ENCODE measurements at regions of chr16 and their contacts with region 1.

Region 1: GRCh38 chr16:57235128-57236021 is 9.7 kb upstream of the ARL2BP start:
- DNase-seq: no peak
- ATAC-seq: peak in 3 of 4 donors; percentile 13 to 25 (median 17)
- H3K4me3 ChIP-seq: no peak overlapping the region
- H3K27ac ChIP-seq: peak overlapping the region in 5 of 12 donors; percentile 5 to 72 (median 65)
- H3K4me1 ChIP-seq: peaks cover 0 to 24% (median 7%) of the 10 kb centered on the region in 12 donors
- H3K27me3 ChIP-seq: no peaks in the 10 kb centered on the region
- CTCF ChIP-seq: no peak
- POLR2A ChIP-seq: no peak

Region 2: DNA sequence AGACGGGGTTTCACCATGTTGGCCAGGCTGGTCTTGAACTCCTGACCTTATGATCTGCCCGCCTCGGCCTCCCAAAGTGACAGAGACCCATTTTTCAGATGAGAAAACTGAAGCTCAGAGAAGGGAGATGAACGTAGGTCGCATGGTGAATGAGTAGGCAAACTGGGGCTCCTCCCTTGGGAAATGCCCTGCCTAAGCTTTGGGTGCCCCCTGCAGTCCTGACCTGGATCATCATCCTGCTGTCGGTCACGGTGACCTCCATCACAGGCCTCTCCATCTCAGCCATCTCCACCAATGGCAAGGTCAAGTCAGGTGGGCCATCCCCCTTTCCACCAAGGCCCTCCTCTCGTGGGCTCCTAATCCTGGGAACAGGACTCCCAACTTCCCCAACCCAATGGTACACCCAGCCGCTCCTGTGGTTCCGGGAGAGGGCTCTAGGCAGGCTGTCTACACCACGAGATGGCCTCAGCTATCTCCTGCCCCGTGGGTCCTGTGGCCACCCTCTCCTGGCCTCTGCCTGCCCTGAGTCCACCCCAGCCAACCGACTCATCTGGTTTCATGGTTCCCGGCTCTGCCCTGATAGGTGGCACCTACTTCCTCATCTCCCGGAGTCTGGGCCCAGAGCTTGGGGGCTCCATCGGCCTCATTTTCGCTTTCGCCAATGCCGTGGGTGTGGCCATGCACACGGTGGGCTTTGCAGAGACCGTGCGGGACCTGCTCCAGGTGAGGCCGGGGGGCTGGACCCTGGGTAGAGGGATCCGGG is 365.7 kb before region 1 on chr16:
- intact Hi-C with region 1: no loop called
- DNase-seq: no peak
- ATAC-seq: no peak
- H3K4me3 ChIP-seq: no peak overlapping the region
- H3K27ac ChIP-seq: no peak overlapping the region
- H3K4me1 ChIP-seq: peaks cover 0 to 22% (median 5%) of the 10 kb centered on the region in 12 donors
- H3K27me3 ChIP-seq: no peaks in the 10 kb centered on the region
- CTCF ChIP-seq: no peak
- POLR2A ChIP-seq: no peak

Region 3: GRCh38 chr16:57165938-57166337 is 69.4 kb before region 1 on chr16:
- intact Hi-C with region 1: no loop called
- DNase-seq: no peak
- ATAC-seq: no peak
- H3K4me3 ChIP-seq: no peak overlapping the region
- H3K27ac ChIP-seq: no peak overlapping the region
- H3K4me1 ChIP-seq: peaks cover 0 to 23% (median 12%) of the 10 kb centered on the region in 12 donors
- H3K27me3 ChIP-seq: no peaks in the 10 kb centered on the region
- CTCF ChIP-seq: no peak
- POLR2A ChIP-seq: no peak

Region 4: GRCh38 chr16:57194512-57194911 is 40.9 kb before region 1 on chr16:
- intact Hi-C with region 1: loop called in 1 of 10 experiments (anchors 5 kb)
- DNase-seq: no peak
- ATAC-seq: peak in 3 of 4 donors; percentile 61 to 90 (median 64)
- H3K4me3 ChIP-seq: no peak overlapping the region
- H3K27ac ChIP-seq: peak overlapping the region in 2 of 12 donors; percentile 18 to 34
- H3K4me1 ChIP-seq: peaks cover 0 to 50% (median 22%) of the 10 kb centered on the region in 12 donors
- H3K27me3 ChIP-seq: no peaks in the 10 kb centered on the region
- CTCF ChIP-seq: no peak
- POLR2A ChIP-seq: no peak

Measured in heart left ventricle (tissue), 16 donors.